ENCODE measurements at regions of chr6 and their contacts with region 1.

Region 1: DNA sequence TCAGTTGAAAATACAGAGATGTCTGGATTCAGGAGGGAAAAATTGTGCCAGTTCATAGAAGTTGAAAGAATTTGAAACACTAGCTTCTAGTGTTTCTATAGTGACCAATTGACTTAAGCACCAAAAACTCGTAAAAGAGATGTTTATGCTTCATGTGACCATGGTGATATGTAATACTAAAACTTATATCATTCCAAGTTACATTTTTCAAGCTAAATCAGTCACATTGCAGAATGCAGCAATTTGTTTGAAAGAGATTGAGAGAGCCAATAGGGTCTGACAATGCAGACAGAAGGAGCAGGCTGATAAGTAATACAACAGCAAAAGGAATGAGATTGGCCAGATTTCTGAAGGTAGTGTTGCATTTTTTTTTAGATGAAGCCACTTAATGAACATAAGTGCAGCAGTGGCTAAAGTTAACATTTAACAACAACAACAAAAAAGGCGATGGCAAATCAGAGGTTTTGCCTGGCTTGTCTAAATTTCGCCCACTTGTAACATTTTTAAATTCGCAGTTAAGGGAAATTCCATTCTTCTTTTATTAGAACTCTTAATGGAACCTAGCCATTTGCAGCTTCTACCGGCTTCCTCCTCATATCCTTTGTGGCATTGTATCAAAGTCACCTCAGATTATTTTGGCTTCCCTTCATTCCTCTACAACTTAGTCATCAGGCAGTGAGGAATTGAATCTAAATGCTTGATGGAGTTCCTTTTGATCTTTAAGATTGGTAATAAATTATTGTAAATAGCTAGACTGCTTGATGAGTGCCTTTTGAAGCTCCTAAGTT is 484.0 kb upstream of the SOX4 start:
- DNase-seq: no peak
- H3K4me3 ChIP-seq: no peak overlapping the region
- H3K4me3 Mint-ChIP-seq: no peak overlapping the region
- H3K27ac Mint-ChIP-seq: peak overlapping the region; percentile 85
- H3K4me1 ChIP-seq: peaks cover 33% of the 10 kb centered on the region
- H3K4me1 Mint-ChIP-seq: peaks cover 28% of the 10 kb centered on the region
- H3K27me3 ChIP-seq: no peaks in the 10 kb centered on the region
- H3K27me3 Mint-ChIP-seq: no peaks in the 10 kb centered on the region
- CTCF ChIP-seq: no peak

Region 2: GRCh38 chr6:20877008-20877937 is 232.3 kb before region 1 on chr6:
- CTCF ChIA-PET with region 1: no interaction called
- POLR2A ChIA-PET with region 1: no interaction called
- intact Hi-C with region 1: loop called (anchors 5 kb)
- DNase-seq: peak; percentile 82 to 89
- H3K4me3 ChIP-seq: no peak overlapping the region
- H3K4me3 Mint-ChIP-seq: peak overlapping the region; percentile 51
- H3K27ac Mint-ChIP-seq: peak overlapping the region; percentile 92
- H3K4me1 ChIP-seq: peaks cover 41% of the 10 kb centered on the region
- H3K4me1 Mint-ChIP-seq: peaks cover 33% of the 10 kb centered on the region
- H3K27me3 ChIP-seq: no peaks in the 10 kb centered on the region
- H3K27me3 Mint-ChIP-seq: no peaks in the 10 kb centered on the region
- CTCF ChIP-seq: no peak

Region 3: GRCh38 chr6:20952699-20953474 is 156.7 kb before region 1 on chr6:
- CTCF ChIA-PET with region 1: no interaction called
- POLR2A ChIA-PET with region 1: no interaction called
- intact Hi-C with region 1: loop called (anchors 5 kb)
- DNase-seq: no peak
- H3K4me3 ChIP-seq: no peak overlapping the region
- H3K4me3 Mint-ChIP-seq: no peak overlapping the region
- H3K27ac Mint-ChIP-seq: no peak overlapping the region
- H3K4me1 ChIP-seq: no peaks in the 10 kb centered on the region
- H3K4me1 Mint-ChIP-seq: no peaks in the 10 kb centered on the region
- H3K27me3 ChIP-seq: no peaks in the 10 kb centered on the region
- H3K27me3 Mint-ChIP-seq: no peaks in the 10 kb centered on the region
- CTCF ChIP-seq: no peak

Region 4: DNA sequence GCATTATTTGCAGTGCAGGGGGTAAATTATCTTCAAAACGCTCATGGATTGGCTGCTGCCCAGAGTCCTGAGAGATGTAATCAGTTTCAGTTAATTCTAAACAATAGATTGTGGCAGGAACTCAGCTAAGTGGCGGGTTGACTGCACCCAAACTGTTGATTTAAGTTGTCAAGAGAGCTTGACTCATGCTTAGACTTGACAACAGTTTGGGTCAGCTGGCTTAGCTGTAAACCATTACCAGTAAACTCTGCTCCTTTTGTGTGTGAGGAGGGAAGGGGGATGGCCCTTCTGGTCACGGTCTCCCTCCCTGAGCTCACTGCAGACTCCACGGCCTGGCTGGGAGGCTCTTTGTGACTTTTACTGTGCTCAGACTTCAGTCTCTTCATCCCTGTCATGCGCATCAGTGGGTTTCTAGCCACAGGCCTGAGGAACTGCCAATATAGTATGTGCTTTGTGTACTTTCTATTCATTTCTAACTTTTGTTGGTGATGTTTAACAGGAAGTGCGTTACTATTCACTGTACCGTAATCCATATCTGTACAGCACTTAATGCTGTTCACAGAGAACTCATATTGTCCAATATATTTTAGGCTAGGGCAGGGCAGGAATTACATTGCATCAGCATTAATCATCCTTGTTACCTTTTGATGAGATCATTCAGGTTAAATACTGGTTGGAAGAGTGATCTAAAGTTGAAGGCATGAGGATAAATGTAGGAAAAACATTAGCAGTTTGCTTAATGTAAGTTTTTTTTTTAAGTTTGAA is 87.1 kb before region 1 on chr6:
- CTCF ChIA-PET with region 1: no interaction called
- POLR2A ChIA-PET with region 1: no interaction called
- intact Hi-C with region 1: loop called (anchors 5 kb)
- DNase-seq: peak in 1 of 2 experiments; percentile 31
- H3K4me3 ChIP-seq: no peak overlapping the region
- H3K4me3 Mint-ChIP-seq: no peak overlapping the region
- H3K27ac Mint-ChIP-seq: no peak overlapping the region
- H3K4me1 ChIP-seq: 0 out of 2 replicates have a peak, but pooled peaks cover 4% of the 10 kb centered on the region
- H3K4me1 Mint-ChIP-seq: no peaks in the 10 kb centered on the region
- H3K27me3 ChIP-seq: no peaks in the 10 kb centered on the region
- H3K27me3 Mint-ChIP-seq: no peaks in the 10 kb centered on the region
- CTCF ChIP-seq: no peak

Region 5: DNA sequence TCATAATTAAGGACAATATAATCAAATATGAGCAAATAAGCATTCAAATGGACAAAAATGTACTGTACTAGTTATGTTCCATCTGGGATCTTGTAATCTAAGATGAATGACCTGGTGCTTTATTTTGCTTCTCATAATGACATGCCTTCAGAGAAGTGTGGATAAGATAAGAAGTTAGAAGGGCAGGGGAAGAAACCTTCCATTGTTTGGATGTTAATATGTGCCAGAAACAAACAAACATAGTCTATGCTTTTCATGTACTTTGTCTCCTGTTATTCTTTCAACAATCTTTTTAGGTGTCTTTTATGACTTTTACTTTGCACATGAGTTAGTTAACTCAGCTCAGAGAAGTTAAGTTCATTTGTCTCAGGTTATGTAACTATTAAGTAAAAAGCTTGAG is 27.5 kb before region 1 on chr6:
- CTCF ChIA-PET with region 1: no interaction called
- POLR2A ChIA-PET with region 1: no interaction called
- intact Hi-C with region 1: loop called (anchors 1 kb)
- DNase-seq: peak in 1 of 2 experiments; percentile 34
- H3K4me3 ChIP-seq: no peak overlapping the region
- H3K4me3 Mint-ChIP-seq: peak overlapping the region; percentile 1
- H3K27ac Mint-ChIP-seq: no peak overlapping the region
- H3K4me1 ChIP-seq: peaks cover 31% of the 10 kb centered on the region
- H3K4me1 Mint-ChIP-seq: peaks cover 21% of the 10 kb centered on the region
- H3K27me3 ChIP-seq: no peaks in the 10 kb centered on the region
- H3K27me3 Mint-ChIP-seq: no peaks in the 10 kb centered on the region
- CTCF ChIP-seq: no peak

Region 6: DNA sequence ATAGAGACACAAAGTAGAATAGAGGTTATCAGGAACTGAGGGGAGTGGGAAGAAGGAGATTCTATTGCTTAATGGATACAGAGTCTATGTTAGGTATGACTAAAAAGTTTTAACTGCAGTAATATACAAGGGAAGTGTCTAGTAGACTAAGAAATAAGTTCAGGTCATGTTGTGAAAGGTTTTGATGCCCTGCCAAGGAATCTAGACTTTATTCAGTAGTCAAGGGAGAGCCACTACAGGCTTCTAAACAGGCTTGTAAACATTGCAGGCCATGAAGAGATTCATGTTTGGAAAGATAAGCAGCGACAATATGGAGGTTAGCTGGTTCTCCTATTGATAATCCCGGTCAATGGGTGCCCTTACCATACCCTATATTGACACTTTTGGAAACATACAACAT is 131.1 kb after region 1 on chr6:
- CTCF ChIA-PET with region 1: no interaction called
- POLR2A ChIA-PET with region 1: no interaction called
- intact Hi-C with region 1: loop called (anchors 5 kb)
- DNase-seq: peak in 1 of 2 experiments; percentile 38
- H3K4me3 ChIP-seq: no peak overlapping the region
- H3K4me3 Mint-ChIP-seq: no peak overlapping the region
- H3K27ac Mint-ChIP-seq: peak overlapping the region; percentile 2
- H3K4me1 ChIP-seq: peaks cover 15% of the 10 kb centered on the region
- H3K4me1 Mint-ChIP-seq: peaks cover 24% of the 10 kb centered on the region
- H3K27me3 ChIP-seq: no peaks in the 10 kb centered on the region
- H3K27me3 Mint-ChIP-seq: no peaks in the 10 kb centered on the region
- CTCF ChIP-seq: no peak

Measured in Caco-2 (cell line).